HepG2 (cell line): ENCODE measurements at regions of chr13 and their contacts with region 1.

Region 1: GRCh38 chr13:24313439-24313838 is 4.1 kb downstream of the C1QTNF9 start:
- DNase-seq: no peak
- ATAC-seq: no peak
- H3K4me3 ChIP-seq: no peak overlapping the region
- H3K27ac ChIP-seq: no peak overlapping the region
- H3K4me1 ChIP-seq: no peaks in the 10 kb centered on the region
- H3K27me3 ChIP-seq: no peaks in the 10 kb centered on the region
- CTCF ChIP-seq: 0 out of 2 replicates have a peak, but pooled peaks have one; percentile 18
- EP300 ChIP-seq: no peak
- POLR2A ChIP-seq: no peak
- RAD21 ChIP-seq: no peak

Region 2: GRCh38 chr13:23845105-23845725 is 468.2 kb before region 1 on chr13:
- CTCF ChIA-PET with region 1: no interaction called
- POLR2A ChIA-PET with region 1: no interaction called
- in situ Hi-C with region 1: no loop called
- intact Hi-C with region 1: no loop called
- DNase-seq: no peak
- ATAC-seq: no peak
- H3K4me3 ChIP-seq: no peak overlapping the region
- H3K27ac ChIP-seq: no peak overlapping the region
- H3K4me1 ChIP-seq: no peaks in the 10 kb centered on the region
- H3K27me3 ChIP-seq: no peaks in the 10 kb centered on the region
- CTCF ChIP-seq: no peak
- EP300 ChIP-seq: no peak
- POLR2A ChIP-seq: no peak
- RAD21 ChIP-seq: no peak

Region 3: GRCh38 chr13:24160454-24161009 is 152.9 kb before region 1 on chr13 and contains the start of gene SPATA13:
- CTCF ChIA-PET with region 1: no interaction called
- POLR2A ChIA-PET with region 1: no interaction called
- in situ Hi-C with region 1: no loop called
- intact Hi-C with region 1: no loop called
- DNase-seq: peak; percentile 75
- ATAC-seq: peak; percentile 90
- H3K4me3 ChIP-seq: peak within 1 kb of the TSS; percentile 72 to 93 (median 87)
- H3K27ac ChIP-seq: peak within 1 kb of the TSS; percentile 62
- H3K4me1 ChIP-seq: peaks cover 33% of the 10 kb centered on the region
- H3K27me3 ChIP-seq: no peaks in the 10 kb centered on the region; a peak in 1 of 5 replicates
- CTCF ChIP-seq: no peak
- EP300 ChIP-seq: no peak
- POLR2A ChIP-seq: peak; percentile 78 to 89; a peak in 3 of 4 replicates
- RAD21 ChIP-seq: no peak; the same call in 1 of the 2 replicates
- total RNA-seq, gene SPATA13: 11.3 and 13.7 TPM in 2 replicates

Region 4: DNA sequence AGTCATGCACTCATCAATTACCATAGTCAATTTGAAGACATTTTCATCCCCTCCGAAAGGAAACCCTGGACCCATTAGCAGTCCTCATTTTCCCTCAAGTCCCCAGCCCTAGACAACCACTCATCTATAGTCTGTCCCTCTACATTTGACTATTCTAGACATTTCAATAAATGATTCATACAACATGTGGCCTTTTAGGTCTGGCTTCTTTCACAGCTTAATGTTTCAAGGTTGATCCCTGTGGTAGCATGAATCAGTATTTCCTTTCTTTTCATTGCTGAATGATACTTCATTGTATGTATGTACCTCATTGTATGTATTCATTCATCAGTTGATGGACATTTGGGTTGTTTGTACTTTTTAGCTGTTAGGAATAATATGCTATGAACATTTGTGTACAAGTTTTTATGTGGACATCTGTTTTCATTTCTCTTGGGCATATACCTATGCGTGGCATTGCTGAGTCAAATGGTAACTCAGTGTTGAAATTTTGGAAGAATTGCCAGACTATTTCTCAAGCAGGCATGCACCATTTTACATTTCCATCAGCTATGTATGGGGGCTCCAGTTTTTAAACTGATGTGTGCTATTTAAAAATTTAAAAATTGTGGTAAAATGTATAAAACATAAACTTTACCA is 134.5 kb before region 1 on chr13:
- CTCF ChIA-PET with region 1: no interaction called
- POLR2A ChIA-PET with region 1: no interaction called
- in situ Hi-C with region 1: no loop called
- intact Hi-C with region 1: no loop called
- DNase-seq: no peak
- ATAC-seq: no peak
- H3K4me3 ChIP-seq: no peak overlapping the region
- H3K27ac ChIP-seq: no peak overlapping the region
- H3K4me1 ChIP-seq: peaks cover 86% of the 10 kb centered on the region
- H3K27me3 ChIP-seq: no peaks in the 10 kb centered on the region
- CTCF ChIP-seq: no peak
- EP300 ChIP-seq: no peak
- POLR2A ChIP-seq: no peak
- RAD21 ChIP-seq: no peak

Region 5: GRCh38 chr13:24396821-24397220 is 83.4 kb after region 1 on chr13:
- CTCF ChIA-PET with region 1: no interaction called
- POLR2A ChIA-PET with region 1: no interaction called
- in situ Hi-C with region 1: no loop called
- intact Hi-C with region 1: no loop called
- DNase-seq: no peak
- ATAC-seq: no peak
- H3K4me3 ChIP-seq: no peak overlapping the region
- H3K27ac ChIP-seq: no peak overlapping the region
- H3K4me1 ChIP-seq: no peaks in the 10 kb centered on the region
- H3K27me3 ChIP-seq: no peaks in the 10 kb centered on the region; a peak in 2 of 5 replicates
- CTCF ChIP-seq: no peak
- EP300 ChIP-seq: no peak
- POLR2A ChIP-seq: no peak
- RAD21 ChIP-seq: no peak

Region 6: DNA sequence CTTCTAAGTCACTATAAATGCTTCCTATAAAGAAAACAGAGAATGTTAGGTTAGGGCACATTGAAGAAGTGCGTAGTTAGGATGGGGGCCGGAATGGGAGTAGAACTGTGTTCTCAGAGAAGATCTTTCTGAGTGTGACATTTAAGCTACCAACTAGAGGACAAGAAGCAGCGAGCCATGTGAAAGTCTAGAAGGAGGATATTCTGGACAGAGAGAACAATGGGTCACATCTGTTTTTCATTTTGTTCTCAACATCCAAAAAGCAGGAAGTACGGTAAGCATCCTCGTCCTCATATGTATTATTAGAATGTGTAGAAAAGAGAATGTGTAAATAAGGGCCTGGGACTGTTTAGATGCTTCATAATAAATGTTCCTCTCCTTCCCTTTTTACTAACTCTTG is 243.6 kb after region 1 on chr13:
- CTCF ChIA-PET with region 1: no interaction called
- POLR2A ChIA-PET with region 1: no interaction called
- in situ Hi-C with region 1: no loop called
- intact Hi-C with region 1: loop called (anchors 5 kb)
- DNase-seq: no peak
- ATAC-seq: no peak
- H3K4me3 ChIP-seq: no peak overlapping the region
- H3K27ac ChIP-seq: no peak overlapping the region
- H3K4me1 ChIP-seq: no peaks in the 10 kb centered on the region
- H3K27me3 ChIP-seq: peaks cover 0 to 6% of the 10 kb centered on the region in 2 experiments; a peak in 1 of 5 replicates
- CTCF ChIP-seq: no peak
- EP300 ChIP-seq: no peak
- POLR2A ChIP-seq: no peak
- RAD21 ChIP-seq: no peak